Dorsolateral prefrontal cortex (tissue), 120 donors: ENCODE measurements at regions of chr2 and their contacts with region 1.

Region 1: DNA sequence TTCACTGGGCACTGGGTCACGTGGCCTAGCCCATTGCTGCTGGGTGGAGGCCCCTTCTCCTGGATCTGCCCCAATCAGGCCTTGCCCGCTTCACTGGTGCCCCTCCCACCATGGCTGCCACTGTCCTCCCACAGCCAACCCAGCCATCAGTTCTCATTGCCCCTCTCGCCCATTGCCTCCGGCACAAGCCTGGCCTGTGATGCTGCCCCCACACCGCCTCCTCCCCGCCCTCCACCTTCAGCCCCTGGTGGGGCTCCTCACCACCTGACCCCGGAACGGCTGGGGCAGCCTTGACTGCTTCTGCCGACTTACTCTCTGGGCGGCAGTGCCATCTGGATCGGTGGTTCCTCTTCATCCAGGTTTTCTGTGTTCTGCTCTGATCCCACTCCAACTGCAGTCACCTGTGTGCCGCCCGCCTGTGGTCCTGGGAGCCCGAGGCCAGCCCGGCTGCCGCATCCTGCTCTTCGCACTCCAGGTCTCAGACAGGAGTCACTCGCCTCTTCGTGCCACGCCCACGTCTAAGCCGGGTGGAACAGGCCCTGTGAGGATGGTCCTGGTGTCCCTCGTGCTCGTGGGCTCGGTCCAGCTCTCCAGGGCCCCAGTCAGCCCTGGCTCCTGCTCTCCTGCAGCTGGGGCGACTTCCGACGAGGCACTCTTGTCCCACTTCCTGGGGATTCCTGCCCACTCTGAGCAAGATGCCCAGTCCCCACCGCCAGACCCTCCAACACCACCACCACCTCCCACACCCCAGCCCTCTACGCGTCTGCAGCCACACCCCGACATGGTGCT is 14.2 kb downstream of the D2HGDH start:
- DNase-seq: no peak
- H3K4me3 ChIP-seq: no peak overlapping the region
- H3K27ac ChIP-seq: no peak overlapping the region
- H3K27me3 ChIP-seq: no peaks in the 10 kb centered on the region
- CTCF ChIP-seq: no peak

Region 2: DNA sequence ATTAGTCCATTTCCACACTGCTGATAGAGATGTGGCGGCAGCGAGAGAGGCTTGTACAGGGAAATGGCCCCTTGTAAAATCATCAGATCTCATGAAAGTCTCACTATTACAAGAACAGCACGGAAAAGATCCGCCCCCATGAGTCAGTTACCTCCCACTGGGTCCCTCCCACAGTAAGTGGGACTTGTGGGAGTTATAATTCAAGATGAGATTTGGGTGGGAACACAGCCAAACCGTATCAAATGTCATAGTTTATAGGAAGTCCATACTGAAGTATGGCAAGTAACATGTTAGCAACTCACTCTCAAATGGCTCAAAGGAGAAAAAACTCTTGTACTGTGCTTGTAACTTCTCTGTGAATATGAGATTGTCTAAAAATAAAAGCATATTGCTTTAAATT is 336.5 kb before region 1 on chr2:
- intact Hi-C with region 1: no loop called
- DNase-seq: no peak
- H3K4me3 ChIP-seq: no peak overlapping the region
- H3K27ac ChIP-seq: peak overlapping the region in 22 of 59 donors; percentile 17 to 95 (median 84)
- H3K27me3 ChIP-seq: no peaks in the 10 kb centered on the region
- CTCF ChIP-seq: no peak

Region 3: DNA sequence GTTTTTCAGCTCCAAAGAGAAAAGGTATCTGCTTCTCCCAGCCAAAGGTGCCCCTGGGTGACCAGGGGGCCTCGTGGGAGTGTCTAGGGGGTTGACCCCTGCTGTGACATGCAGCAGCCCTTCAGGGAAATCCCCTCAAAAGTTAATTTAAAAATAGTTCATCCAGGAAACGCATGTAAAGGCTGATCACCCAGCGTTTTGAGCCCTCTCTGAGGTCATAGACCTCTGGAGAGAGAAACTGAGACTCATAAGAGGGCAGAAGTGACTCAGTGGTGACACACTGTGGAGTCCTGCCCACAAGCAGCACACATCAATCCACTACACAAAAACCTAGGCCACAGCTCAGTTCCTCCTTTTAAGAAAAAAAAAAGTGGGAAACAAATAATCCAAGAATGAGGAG is 39.9 kb after region 1 on chr2:
- intact Hi-C with region 1: loop called in 1 of 2 experiments (anchors 5 kb)
- DNase-seq: no peak
- H3K4me3 ChIP-seq: no peak overlapping the region
- H3K27ac ChIP-seq: no peak overlapping the region
- H3K27me3 ChIP-seq: no peaks in the 10 kb centered on the region
- CTCF ChIP-seq: no peak

Region 4: DNA sequence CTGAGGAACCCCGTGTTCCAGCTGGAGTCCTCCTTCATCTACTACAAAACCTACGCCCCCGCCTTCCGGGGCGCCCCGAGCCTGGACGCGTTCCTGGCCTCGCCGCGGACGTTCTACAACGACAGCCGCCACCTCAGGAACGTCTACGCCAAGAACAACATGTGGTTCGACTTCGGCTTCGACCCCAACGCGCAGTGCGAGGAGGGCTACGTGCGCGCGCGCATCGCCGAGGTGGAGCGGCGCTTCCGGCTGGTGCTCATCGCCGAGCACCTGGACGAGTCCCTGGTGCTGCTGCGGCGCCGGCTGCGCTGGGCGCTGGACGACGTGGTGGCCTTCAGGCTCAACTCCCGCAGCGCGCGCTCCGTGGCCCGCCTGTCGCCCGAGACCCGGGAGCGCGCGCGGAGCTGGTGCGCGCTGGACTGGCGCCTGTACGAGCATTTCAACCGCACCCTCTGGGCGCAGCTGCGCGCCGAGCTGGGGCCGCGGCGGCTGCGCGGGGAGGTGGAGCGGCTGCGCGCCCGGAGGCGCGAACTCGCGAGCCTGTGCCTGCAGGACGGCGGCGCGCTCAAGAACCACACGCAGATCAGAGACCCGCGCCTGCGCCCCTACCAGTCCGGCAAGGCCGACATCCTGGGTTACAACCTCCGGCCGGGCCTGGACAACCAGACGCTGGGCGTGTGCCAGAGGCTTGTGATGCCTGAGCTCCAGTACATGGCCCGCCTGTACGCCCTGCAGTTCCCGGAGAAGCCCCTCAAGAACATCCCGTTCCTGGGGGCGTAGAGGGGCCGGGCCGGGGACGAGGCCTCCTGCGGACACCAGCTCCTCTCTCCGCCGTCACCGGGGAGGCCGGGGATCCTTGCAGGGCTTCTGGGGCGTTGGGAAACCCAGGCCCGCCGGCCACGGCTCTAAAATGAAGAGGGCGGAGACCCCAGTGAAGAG is 55.0 kb after region 1 on chr2:
- intact Hi-C with region 1: no loop called
- DNase-seq: peak in 9 of 10 donors; percentile 43 to 83 (median 70)
- H3K4me3 ChIP-seq: peak overlapping the region; percentile 10 to 72 (median 57)
- H3K27ac ChIP-seq: peak overlapping the region in 55 of 59 donors; percentile 38 to 92 (median 79)
- H3K27me3 ChIP-seq: peaks cover 0 to 22% (median 0%) of the 10 kb centered on the region in 45 donors
- CTCF ChIP-seq: no peak